ENCODE measurements at regions of chrX and their contacts with region 1.

Region 1: GRCh38 chrX:108159028-108159670 is 67.6 kb downstream of the ATG4A start:
- DNase-seq: no peak
- ATAC-seq: no peak
- H3K4me3 ChIP-seq: no peak overlapping the region
- H3K27ac ChIP-seq: no peak overlapping the region
- H3K4me1 ChIP-seq: no peaks in the 10 kb centered on the region
- H3K27me3 ChIP-seq: peaks cover 0 to 3% (median 0%) of the 10 kb centered on the region in 9 donors
- CTCF ChIP-seq: no peak
- POLR2A ChIP-seq: no peak

Region 2: GRCh38 chrX:108216919-108217571 is 57.9 kb after region 1 on chrX:
- intact Hi-C with region 1: loop called in 1 of 10 experiments (anchors 10 kb)
- DNase-seq: no peak
- ATAC-seq: peak; percentile 52 to 80 (median 66)
- H3K4me3 ChIP-seq: no peak overlapping the region
- H3K27ac ChIP-seq: peak overlapping the region in 4 of 12 donors; percentile 13 to 46 (median 34)
- H3K4me1 ChIP-seq: no peaks in the 10 kb centered on the region
- H3K27me3 ChIP-seq: peaks cover 0 to 31% (median 0%) of the 10 kb centered on the region in 9 donors
- CTCF ChIP-seq: no peak
- POLR2A ChIP-seq: no peak

Region 3: DNA sequence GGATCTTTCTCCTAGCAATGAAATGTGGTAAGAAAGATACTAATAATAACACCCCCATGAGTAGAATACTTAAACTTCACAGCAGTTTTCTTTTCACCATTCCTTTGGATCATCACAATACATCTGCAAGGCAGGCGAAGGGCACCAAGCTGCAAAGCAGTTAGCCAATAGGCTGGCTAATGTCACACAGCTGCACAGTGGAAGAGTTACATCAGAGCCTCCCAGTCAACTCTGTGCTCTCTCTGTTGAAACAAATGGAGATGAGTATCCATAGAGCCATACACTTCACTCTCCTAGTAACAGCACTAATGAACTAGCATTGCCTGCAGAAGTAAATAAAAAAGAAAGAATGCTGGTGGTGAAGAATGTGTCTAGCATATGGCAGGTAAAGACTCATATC is 71.4 kb after region 1 on chrX:
- intact Hi-C with region 1: no loop called
- DNase-seq: no peak
- ATAC-seq: no peak
- H3K4me3 ChIP-seq: no peak overlapping the region
- H3K27ac ChIP-seq: no peak overlapping the region
- H3K4me1 ChIP-seq: no peaks in the 10 kb centered on the region
- H3K27me3 ChIP-seq: peaks cover 0 to 43% (median 0%) of the 10 kb centered on the region in 9 donors
- CTCF ChIP-seq: no peak
- POLR2A ChIP-seq: no peak

Measured in heart left ventricle (tissue), 16 donors.